PC-9 (cell line): ENCODE measurements at regions of chr5 and their contacts with region 1.

Region 1: GRCh38 chr5:10552183-10553143 is 11.4 kb upstream of the ANKRD33B start:
- DNase-seq: peak; percentile 47 to 51
- H3K4me3 ChIP-seq: no peak overlapping the region
- H3K27ac ChIP-seq: peak overlapping the region; percentile 91
- H3K4me1 ChIP-seq: peaks cover 74% of the 10 kb centered on the region
- H3K27me3 ChIP-seq: no peaks in the 10 kb centered on the region
- CTCF ChIP-seq: no peak

Region 2: GRCh38 chr5:10283927-10284635 is 268.4 kb before region 1 on chr5:
- CTCF ChIA-PET with region 1: no interaction called
- POLR2A ChIA-PET with region 1: no interaction called
- intact Hi-C with region 1: loop called (anchors 1 kb)
- DNase-seq: peak; percentile 46 to 93
- H3K4me3 ChIP-seq: no peak overlapping the region
- H3K27ac ChIP-seq: no peak overlapping the region
- H3K4me1 ChIP-seq: peaks cover 14% of the 10 kb centered on the region
- H3K27me3 ChIP-seq: no peaks in the 10 kb centered on the region
- CTCF ChIP-seq: peak; percentile 96

Region 3: GRCh38 chr5:10406651-10407050 is 145.8 kb before region 1 on chr5:
- CTCF ChIA-PET with region 1: no interaction called
- POLR2A ChIA-PET with region 1: interaction called, 10 read pairs
- intact Hi-C with region 1: no loop called
- DNase-seq: no peak
- H3K4me3 ChIP-seq: no peak overlapping the region
- H3K27ac ChIP-seq: no peak overlapping the region
- H3K4me1 ChIP-seq: no peaks in the 10 kb centered on the region
- H3K27me3 ChIP-seq: no peaks in the 10 kb centered on the region
- CTCF ChIP-seq: no peak

Region 4: GRCh38 chr5:10513501-10514442 is 38.7 kb before region 1 on chr5:
- CTCF ChIA-PET with region 1: interaction called, 4 read pairs
- POLR2A ChIA-PET with region 1: interaction called, 4 read pairs
- intact Hi-C with region 1: loop called (anchors 1 kb)
- DNase-seq: peak; percentile 75 to 95
- H3K4me3 ChIP-seq: no peak overlapping the region
- H3K27ac ChIP-seq: peak overlapping the region; percentile 91
- H3K4me1 ChIP-seq: peaks cover 56% of the 10 kb centered on the region
- H3K27me3 ChIP-seq: no peaks in the 10 kb centered on the region
- CTCF ChIP-seq: no peak

Region 5: DNA sequence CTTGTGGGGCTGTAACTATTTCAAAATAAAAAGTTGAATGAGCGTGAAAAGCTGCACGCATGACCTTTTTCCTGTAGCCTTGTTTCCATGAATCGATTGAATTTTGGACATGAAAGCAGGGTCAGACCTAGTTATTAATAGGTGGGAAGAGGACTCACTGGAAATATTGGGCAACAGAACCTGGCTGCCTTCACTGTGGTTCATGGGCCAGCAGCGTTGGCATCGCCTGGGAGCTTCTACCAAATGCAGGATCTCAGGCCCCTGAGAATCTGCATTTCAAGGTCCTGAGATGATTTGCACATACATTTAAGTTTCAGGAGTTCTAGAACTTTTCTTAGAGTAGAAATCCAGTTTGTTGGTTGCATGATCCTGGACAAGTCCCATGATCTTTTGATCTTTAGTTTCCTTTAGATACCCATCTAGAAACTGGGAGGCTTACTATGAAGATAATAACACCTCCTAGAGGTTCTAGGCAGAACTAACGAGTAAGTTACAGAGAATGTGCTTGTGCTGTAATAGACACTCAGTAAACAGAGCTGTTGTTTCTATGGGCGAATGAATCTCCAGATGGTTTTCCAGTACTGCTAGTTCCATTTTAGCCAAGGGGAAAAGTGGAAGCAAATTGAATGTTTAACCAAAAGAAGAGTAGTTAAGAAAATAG is 23.8 kb after region 1 on chr5:
- CTCF ChIA-PET with region 1: no interaction called
- POLR2A ChIA-PET with region 1: no interaction called
- intact Hi-C with region 1: no loop called
- DNase-seq: no peak
- H3K4me3 ChIP-seq: no peak overlapping the region
- H3K27ac ChIP-seq: no peak overlapping the region
- H3K4me1 ChIP-seq: peaks cover 5% of the 10 kb centered on the region
- H3K27me3 ChIP-seq: no peaks in the 10 kb centered on the region
- CTCF ChIP-seq: peak; percentile 31; the same call in 1 of the 2 replicates

Region 6: DNA sequence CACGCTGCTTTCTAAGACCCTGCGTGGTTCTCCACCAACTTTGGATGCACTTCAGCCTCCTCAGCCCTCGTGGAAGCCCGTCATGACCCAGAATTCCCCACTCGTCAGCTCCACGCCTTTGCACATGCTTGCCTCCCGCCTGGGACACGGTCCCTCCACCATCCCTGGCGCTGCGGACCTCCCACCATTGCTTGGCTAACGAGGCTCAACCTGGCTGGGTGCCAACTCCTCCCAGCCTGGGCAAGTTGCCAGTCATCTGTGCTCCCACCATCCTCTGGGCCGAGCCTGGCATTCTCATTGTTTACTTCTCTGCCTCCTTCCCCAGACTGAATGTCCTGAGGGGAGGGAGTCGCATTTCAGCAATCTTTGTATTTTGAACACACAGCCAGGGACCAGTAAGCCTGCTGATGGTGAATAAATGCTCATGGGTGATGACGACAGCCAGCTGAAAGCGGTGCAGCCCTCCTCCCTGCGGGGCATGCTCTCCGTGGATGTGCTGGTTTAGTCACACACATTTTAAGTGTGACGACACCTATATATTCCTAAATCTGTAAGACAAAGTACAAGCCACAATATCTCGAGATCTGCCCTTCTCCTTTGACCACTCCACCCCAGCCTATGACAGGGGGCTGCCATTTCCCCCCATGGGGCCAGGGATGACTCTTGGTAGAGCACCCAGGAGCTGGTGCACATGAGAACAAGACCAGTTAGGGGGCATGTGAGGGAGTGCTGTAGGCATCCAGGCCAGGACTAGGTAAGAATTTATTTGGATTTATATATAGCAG is 49.0 kb after region 1 on chr5:
- CTCF ChIA-PET with region 1: interaction called, 6 read pairs
- POLR2A ChIA-PET with region 1: interaction called, 6 read pairs
- intact Hi-C with region 1: loop called (anchors 1 kb)
- DNase-seq: peak; percentile 93 to 99
- H3K4me3 ChIP-seq: peak overlapping the region; percentile 4; the same call in 1 of the 2 replicates
- H3K27ac ChIP-seq: peak overlapping the region; percentile 46
- H3K4me1 ChIP-seq: peaks cover 41% of the 10 kb centered on the region
- H3K27me3 ChIP-seq: no peaks in the 10 kb centered on the region
- CTCF ChIP-seq: no peak

Region 7: GRCh38 chr5:10761166-10761932 is 208.9 kb after region 1 on chr5 and contains the start of gene DAP:
- CTCF ChIA-PET with region 1: no interaction called
- POLR2A ChIA-PET with region 1: no interaction called
- intact Hi-C with region 1: loop called (anchors 1 kb)
- DNase-seq: peak; percentile 60 to 99
- H3K4me3 ChIP-seq: peak within 1 kb of the TSS; percentile 85
- H3K27ac ChIP-seq: peak within 1 kb of the TSS; percentile 80
- H3K4me1 ChIP-seq: peaks cover 36% of the 10 kb centered on the region
- H3K27me3 ChIP-seq: no peaks in the 10 kb centered on the region
- CTCF ChIP-seq: no peak
- total RNA-seq, gene DAP: 256 and 279 TPM in 2 replicates

Region 8: GRCh38 chr5:11992518-11992917 is 1440.1 kb after region 1 on chr5:
- CTCF ChIA-PET with region 1: no interaction called
- POLR2A ChIA-PET with region 1: no interaction called
- intact Hi-C with region 1: no loop called
- DNase-seq: no peak
- H3K4me3 ChIP-seq: no peak overlapping the region
- H3K27ac ChIP-seq: no peak overlapping the region
- H3K4me1 ChIP-seq: no peaks in the 10 kb centered on the region
- H3K27me3 ChIP-seq: no peaks in the 10 kb centered on the region
- CTCF ChIP-seq: no peak